PC-9 (cell line): ENCODE measurements at regions of chr10 and their contacts with region 1.

Region 1: DNA sequence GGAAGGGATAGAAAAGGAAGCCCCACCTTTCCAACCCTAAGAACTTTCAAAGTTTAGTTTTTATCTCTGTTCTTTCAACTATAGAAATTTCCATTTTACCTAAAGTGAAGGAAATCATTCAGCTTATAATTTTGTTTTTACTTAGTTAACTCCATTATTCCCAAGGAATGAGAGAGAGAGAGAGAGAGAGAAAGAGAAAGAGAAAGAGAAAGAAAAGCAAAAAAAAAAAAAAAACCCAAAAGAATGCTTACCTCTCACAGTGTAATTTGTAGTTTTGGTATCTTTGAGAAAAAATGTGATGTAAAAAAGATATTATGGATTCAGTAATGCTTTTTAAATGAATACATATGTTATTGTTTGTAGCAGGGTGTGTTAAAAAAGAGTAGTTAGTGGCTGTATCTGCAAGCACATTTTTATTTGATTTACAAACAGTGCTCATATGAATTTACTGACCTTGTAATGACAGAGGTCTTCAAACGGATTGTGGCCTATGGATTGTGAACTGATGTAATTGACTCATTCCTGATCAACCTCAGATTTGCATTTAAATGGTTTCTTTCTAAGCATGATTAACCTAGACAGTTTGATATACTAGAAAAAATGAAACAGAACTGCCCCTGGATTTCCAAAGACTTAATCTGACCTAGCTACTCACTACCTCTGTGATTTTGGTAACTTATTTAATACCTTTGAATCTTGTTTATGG is 64.9 kb downstream of the LCOR start:
- DNase-seq: no peak
- H3K4me3 ChIP-seq: no peak overlapping the region
- H3K27ac ChIP-seq: no peak overlapping the region
- H3K4me1 ChIP-seq: no peaks in the 10 kb centered on the region
- H3K27me3 ChIP-seq: no peaks in the 10 kb centered on the region
- CTCF ChIP-seq: no peak

Region 2: GRCh38 chr10:95537542-95537927 is 1359.5 kb before region 1 on chr10:
- CTCF ChIA-PET with region 1: interaction called, 11 read pairs
- POLR2A ChIA-PET with region 1: no interaction called
- intact Hi-C with region 1: no loop called
- DNase-seq: peak; percentile 19 to 85
- H3K4me3 ChIP-seq: no peak overlapping the region
- H3K27ac ChIP-seq: peak overlapping the region; percentile 83
- H3K4me1 ChIP-seq: peaks cover 15% of the 10 kb centered on the region
- H3K27me3 ChIP-seq: no peaks in the 10 kb centered on the region
- CTCF ChIP-seq: no peak